MCF 10A (cell line): ENCODE measurements at regions of chr1 and their contacts with region 1.

Region 1: DNA sequence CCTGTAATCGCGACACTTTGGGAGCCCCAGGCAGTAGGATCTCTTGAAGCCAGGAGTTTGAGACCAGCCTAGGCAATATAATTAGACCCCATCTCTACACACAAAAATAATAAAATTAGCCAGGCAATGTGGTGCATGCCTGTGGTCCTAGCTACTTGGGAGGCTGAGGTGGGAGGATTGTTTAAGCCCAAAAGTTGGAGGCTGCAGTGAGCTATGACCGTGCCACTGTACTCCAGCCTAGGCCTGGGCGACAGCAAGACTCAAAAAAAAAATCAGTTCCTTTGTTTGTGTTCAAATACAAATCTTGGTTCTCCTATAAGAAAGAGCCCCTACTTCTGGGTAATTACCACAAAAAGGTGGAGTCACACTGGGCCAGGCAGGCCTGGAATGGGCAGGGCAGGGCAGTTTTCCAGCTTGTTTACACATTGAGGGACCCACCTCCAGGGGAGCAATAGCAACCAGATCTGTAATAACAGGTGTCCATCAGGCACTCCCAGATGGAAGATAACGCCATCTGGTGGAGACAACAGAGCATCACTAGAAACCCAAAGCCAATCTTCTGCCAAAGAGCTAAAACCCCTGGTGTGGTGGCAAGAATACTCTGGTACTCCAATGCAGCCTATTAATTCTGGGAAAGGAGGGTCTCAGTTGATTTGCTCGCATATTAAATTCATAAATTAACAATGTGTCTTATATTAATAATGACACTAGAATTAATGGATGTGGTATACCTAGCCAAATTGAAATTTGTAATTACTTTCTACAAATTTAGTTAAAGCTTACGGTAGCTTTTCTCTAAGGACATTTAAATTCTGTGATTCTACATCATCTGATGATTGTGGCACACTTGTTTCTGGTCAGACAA is 13.2 kb downstream of the PPP1R15B start:
- DNase-seq: peak; percentile 97
- H3K4me3 Mint-ChIP-seq: no peak overlapping the region
- H3K27ac Mint-ChIP-seq: peak overlapping the region; percentile 84
- H3K4me1 Mint-ChIP-seq: no peaks in the 10 kb centered on the region
- H3K27me3 Mint-ChIP-seq: no peaks in the 10 kb centered on the region
- CTCF ChIP-seq: peak; percentile 98

Region 2: DNA sequence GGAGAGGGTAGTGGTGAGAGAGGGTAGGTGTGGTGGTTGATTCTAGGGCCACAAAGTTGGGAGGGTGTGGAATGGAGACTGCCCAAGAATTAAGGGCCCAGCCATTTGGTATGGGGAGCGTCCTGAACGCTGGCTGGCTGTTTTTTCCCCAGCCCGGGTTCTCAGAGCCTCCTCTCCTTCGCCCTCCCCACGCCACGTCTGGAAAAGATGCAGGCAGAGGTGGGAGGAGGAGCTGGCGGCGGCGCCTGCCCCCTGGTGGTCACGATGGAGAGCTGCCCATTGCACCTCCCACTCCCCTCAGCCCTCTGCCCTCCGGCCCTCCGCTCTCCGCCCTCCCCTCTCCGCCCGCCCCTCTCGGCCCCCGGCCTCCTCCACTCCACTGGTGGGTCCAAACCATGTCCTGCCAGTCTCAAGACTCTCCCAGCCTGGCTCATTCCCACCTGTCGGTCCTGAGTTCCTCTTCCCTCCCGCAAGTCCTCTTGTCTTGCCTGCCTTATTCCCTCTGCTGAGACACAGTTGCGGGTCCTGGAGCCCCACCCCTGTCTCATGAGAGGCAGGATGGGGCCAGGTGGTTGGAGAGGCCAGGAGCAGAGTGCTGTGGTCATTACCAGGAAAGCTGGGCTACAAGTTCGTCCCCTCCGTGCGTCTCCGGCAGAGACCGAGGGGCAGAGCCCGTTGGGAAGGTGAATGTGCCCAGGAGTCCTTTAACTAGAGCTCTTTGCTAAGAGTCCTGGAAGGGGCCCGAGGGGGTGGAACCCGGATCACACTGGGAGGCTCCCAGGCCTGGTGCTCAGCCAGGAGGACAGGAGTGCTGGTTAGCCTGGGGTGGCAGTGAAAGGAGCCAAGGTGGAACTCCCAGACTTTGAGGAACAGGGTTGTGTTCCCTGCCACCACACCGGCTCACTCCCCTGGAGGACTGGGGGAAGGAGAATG is 269.2 kb before region 1 on chr1:
- CTCF ChIA-PET with region 1: interaction called, 10 read pairs
- POLR2A ChIA-PET with region 1: no interaction called
- intact Hi-C with region 1: no loop called
- DNase-seq: peak; percentile 86
- H3K4me3 Mint-ChIP-seq: peak overlapping the region; percentile 68
- H3K27ac Mint-ChIP-seq: peak overlapping the region; percentile 63
- H3K4me1 Mint-ChIP-seq: peaks cover 58% of the 10 kb centered on the region
- H3K27me3 Mint-ChIP-seq: no peaks in the 10 kb centered on the region
- CTCF ChIP-seq: peak; percentile 100

Region 3: GRCh38 chr1:204207136-204207616 is 191.3 kb before region 1 on chr1:
- CTCF ChIA-PET with region 1: interaction called, 22 read pairs
- POLR2A ChIA-PET with region 1: interaction called, 4 read pairs
- intact Hi-C with region 1: no loop called
- DNase-seq: peak; percentile 76
- H3K4me3 Mint-ChIP-seq: no peak overlapping the region
- H3K27ac Mint-ChIP-seq: no peak overlapping the region
- H3K4me1 Mint-ChIP-seq: no peaks in the 10 kb centered on the region
- H3K27me3 Mint-ChIP-seq: peaks cover 38% of the 10 kb centered on the region
- CTCF ChIP-seq: peak; percentile 99

Region 4: DNA sequence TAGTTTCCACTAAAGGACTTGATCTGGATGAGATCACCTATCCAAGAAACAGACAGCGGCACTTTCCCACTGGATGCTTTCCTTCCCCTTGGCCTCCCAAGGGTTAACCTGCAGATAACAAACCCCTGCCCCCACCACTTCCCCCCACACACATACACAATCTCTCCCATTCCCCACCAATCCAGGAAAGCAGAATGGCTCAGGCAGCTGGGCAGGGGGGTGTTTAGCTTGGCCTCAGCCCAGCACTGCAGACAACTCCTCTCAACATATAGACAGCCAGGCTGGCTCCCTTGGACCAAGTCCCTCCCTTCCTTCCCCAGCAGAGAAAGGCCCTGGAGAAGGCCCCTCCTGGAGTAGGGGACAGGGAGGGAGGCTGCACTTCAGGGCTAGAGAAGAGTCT is 63.4 kb before region 1 on chr1:
- CTCF ChIA-PET with region 1: no interaction called
- POLR2A ChIA-PET with region 1: no interaction called
- intact Hi-C with region 1: no loop called
- DNase-seq: no peak
- H3K4me3 Mint-ChIP-seq: no peak overlapping the region
- H3K27ac Mint-ChIP-seq: no peak overlapping the region
- H3K4me1 Mint-ChIP-seq: no peaks in the 10 kb centered on the region
- H3K27me3 Mint-ChIP-seq: no peaks in the 10 kb centered on the region
- CTCF ChIP-seq: no peak

Region 5: GRCh38 chr1:204350857-204351573 is 47.4 kb before region 1 on chr1:
- CTCF ChIA-PET with region 1: interaction called, 17 read pairs
- POLR2A ChIA-PET with region 1: interaction called, 4 read pairs
- intact Hi-C with region 1: no loop called
- DNase-seq: no peak
- H3K4me3 Mint-ChIP-seq: no peak overlapping the region
- H3K27ac Mint-ChIP-seq: no peak overlapping the region
- H3K4me1 Mint-ChIP-seq: no peaks in the 10 kb centered on the region
- H3K27me3 Mint-ChIP-seq: no peaks in the 10 kb centered on the region
- CTCF ChIP-seq: no peak

Region 6: GRCh38 chr1:204411451-204412204 is 13.2 kb after region 1 on chr1 and contains the start of gene PPP1R15B:
- CTCF ChIA-PET with region 1: interaction called, 29 read pairs
- POLR2A ChIA-PET with region 1: interaction called, 56 read pairs
- intact Hi-C with region 1: no loop called
- DNase-seq: peak; percentile 100
- H3K4me3 Mint-ChIP-seq: peak within 1 kb of the TSS; percentile 100
- H3K27ac Mint-ChIP-seq: peak within 1 kb of the TSS; percentile 100
- H3K4me1 Mint-ChIP-seq: peaks cover 18% of the 10 kb centered on the region
- H3K27me3 Mint-ChIP-seq: no peaks in the 10 kb centered on the region
- CTCF ChIP-seq: no peak
- total RNA-seq, gene PPP1R15B: 86.0 and 94.8 TPM in 2 replicates

Region 7: DNA sequence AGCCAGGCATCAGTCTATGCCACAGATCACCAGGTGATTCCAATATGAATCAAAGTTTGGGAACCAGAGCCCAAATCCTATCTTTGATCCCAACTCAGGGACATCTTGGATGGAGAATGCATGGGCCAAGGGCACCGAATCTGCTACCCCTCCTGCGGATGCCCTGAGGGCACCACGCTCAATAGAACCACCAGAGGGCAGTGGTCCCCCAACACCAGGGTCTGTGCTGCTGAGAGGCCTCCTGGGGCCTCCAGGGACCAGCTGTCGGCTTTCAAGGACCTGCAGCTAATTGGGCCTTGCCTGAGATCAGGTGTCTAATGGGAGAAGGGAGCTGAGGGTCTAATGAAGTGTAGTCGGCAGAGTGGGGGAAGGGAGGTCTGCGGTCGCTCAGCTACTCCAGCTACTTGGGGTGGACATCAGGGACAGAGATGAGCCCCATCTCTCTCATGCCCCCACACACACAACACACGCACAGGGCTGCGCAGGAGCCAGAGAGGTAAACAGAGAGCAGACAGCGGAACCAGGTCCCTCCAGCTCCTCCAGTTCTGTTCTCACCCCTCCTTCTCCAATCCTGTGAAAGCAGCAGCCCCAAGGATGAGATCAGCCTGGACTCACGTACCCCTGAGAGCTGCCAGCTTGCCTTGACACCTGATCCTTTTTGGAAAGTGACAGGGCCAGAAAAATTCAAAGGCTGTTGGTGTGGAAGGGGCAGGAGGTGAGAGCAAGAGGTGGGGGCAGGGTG is 48.1 kb after region 1 on chr1:
- CTCF ChIA-PET with region 1: interaction called, 10 read pairs
- POLR2A ChIA-PET with region 1: interaction called, 3 read pairs
- intact Hi-C with region 1: no loop called
- DNase-seq: peak; percentile 65
- H3K4me3 Mint-ChIP-seq: no peak overlapping the region
- H3K27ac Mint-ChIP-seq: no peak overlapping the region
- H3K4me1 Mint-ChIP-seq: peaks cover 46% of the 10 kb centered on the region
- H3K27me3 Mint-ChIP-seq: no peaks in the 10 kb centered on the region
- CTCF ChIP-seq: peak; percentile 49

Region 8: GRCh38 chr1:204782118-204782700 is 383.8 kb after region 1 on chr1:
- CTCF ChIA-PET with region 1: no interaction called
- POLR2A ChIA-PET with region 1: no interaction called
- intact Hi-C with region 1: no loop called
- DNase-seq: peak; percentile 27
- H3K4me3 Mint-ChIP-seq: no peak overlapping the region
- H3K27ac Mint-ChIP-seq: no peak overlapping the region
- H3K4me1 Mint-ChIP-seq: no peaks in the 10 kb centered on the region
- H3K27me3 Mint-ChIP-seq: peaks cover 54% of the 10 kb centered on the region
- CTCF ChIP-seq: no peak